ENCODE measurements at regions of chr18 and their contacts with region 1.

Region 1: DNA sequence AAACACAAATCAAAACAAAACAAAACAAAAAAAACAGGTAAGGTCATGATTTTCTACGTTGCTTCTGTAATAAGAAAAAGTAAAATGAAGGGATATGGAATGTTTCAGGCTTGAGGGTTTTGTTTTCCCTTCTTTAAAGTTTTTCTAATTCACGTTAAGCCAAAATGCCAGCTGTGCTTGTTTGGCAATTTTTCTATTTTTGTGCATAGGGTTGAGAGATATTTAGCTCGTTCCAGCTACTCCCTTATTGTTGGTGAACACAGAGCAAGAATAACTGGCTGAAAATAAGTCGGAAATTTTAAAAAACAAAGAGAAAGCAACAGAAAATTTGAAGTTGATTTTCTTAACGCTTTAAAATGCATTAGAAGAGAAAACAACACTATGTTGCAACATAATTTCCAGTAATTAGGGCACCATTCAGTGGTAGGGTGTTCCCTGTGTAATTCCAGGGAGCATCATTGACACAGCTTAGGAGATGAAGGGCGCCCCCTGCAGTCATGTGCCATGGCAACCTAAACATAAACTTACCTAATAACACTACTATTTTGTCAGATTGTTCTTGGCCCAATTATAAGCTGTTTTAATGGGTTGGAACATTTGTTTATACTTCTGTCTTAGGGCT is 99.5 kb downstream of the DTNA start:
- DNase-seq: no peak
- H3K4me3 ChIP-seq: no peak overlapping the region
- H3K27ac ChIP-seq: no peak overlapping the region
- H3K27me3 ChIP-seq: no peaks in the 10 kb centered on the region
- CTCF ChIP-seq: peak; percentile 44

Region 2: GRCh38 chr18:34787931-34788532 is 21.5 kb before region 1 on chr18:
- CTCF ChIA-PET with region 1: interaction called, 11 read pairs
- POLR2A ChIA-PET with region 1: no interaction called
- DNase-seq: no peak
- H3K4me3 ChIP-seq: no peak overlapping the region
- H3K27ac ChIP-seq: no peak overlapping the region
- H3K27me3 ChIP-seq: no peaks in the 10 kb centered on the region
- CTCF ChIP-seq: peak; percentile 69

Region 3: DNA sequence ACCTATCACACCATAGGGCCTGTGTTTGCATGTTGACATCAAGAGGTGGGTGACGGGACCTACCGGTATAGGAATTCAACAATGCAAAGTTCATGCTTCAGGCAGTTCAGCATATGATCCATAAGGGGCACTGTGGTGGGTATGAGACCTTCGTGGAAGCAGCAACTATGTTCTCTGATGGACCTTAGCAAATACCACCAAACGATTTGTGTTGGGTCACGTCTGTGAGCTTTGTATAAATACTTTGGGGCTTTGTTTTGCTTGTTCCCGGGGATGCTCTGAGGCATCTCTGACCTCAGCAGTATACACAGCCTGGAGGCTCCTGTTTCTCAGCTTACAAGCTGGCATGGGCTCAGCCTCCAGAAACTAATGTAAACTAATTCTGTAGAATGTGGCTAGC is 12.2 kb after region 1 on chr18:
- CTCF ChIA-PET with region 1: interaction called, 19 read pairs
- POLR2A ChIA-PET with region 1: no interaction called
- DNase-seq: peak; percentile 74
- H3K4me3 ChIP-seq: no peak overlapping the region
- H3K27ac ChIP-seq: no peak overlapping the region
- H3K27me3 ChIP-seq: no peaks in the 10 kb centered on the region
- CTCF ChIP-seq: peak; percentile 43